ENCODE measurements at regions of chr22 and their contacts with region 1.

Region 1: DNA sequence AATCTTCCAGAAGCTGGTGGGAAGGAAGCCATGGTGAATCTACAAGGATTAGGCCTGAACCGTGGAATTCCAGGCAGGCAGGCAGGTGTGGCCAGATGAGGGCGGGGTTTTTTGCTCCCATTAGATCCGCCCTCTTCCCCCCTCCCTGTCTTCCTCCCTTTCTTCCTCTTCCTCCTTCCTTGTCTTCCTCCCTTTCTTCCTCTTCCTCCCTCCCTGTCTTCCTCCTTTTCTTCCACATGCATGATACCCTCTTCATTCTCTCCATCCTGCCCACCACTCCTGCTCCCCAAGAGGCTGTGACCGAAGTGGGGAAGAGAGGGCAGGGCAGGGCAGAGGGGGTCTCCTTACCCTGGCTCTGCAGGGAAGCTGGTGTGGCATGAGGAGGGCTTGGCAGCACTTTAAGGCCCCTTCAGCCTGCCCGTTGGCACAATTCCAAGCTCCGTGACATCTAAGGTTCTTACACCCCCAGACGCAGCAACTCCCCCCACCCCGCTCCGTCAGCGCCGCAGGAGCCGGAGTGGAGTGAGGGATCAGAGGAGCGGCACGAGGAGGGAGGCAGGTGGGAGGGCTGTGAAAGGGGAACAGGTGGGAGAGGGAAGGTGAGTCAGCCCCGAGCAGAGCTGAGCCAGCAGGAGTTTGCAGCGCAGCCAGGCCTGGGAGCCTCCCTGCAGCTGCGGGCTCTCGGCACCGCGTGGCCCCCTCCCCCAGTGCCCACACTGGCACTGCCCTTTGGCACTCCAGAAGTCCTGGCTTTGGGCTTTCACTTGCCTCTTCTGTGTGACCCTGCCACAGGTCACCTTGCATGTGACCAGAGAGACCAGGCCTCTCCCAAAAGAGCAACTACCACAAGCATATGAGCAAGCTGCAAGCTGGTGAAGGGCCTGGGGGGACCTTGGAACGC is 32.1 kb downstream of the KCNJ4 start:
- DNase-seq: no peak
- H3K4me3 ChIP-seq: no peak overlapping the region
- H3K27ac ChIP-seq: no peak overlapping the region
- H3K4me1 ChIP-seq: no peaks in the 10 kb centered on the region
- H3K27me3 ChIP-seq: no peaks in the 10 kb centered on the region
- CTCF ChIP-seq: no peak
- POLR2A ChIP-seq: no peak

Region 2: DNA sequence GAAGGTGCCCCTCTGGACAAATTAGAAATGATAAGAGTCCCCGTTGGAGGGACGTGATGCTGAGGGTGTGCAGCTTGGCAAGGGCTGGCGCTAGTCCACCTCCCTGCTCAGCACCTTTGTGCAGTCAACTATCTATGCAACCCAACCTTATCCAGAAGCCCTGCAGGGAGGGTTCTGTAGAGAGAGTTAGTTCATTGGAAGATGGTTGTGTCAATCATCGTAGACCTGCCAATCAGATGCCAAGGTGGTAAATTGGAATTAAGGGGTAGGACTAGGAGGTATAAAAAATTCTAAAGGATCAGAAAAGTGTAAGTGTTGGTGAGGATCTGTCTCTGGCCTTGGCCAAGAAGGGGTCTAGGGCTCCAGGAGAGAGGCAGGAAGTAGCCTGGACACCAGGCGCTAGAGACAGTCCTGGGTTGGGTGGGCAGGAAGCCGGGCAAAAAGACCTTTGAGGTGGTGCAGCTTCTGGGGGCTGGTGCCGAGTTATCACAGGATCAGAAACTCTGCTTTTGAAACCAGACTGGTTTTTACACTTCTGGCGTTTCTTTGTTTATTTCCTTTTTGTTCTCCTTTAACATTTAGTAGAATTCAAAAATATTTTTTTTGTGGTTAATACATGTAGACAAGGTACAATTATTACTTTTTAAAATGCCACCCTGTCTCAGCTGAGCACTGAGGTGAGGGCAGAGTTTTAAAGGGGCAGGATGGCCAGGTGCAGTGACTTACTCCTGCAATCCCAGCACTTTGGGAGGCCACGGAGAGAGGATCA is 1236.4 kb before region 1 on chr22:
- intact Hi-C with region 1: loop called (anchors 10 kb)
- DNase-seq: no peak
- H3K4me3 ChIP-seq: no peak overlapping the region
- H3K27ac ChIP-seq: peak overlapping the region; percentile 77 to 98
- H3K4me1 ChIP-seq: peaks cover 6 to 15% of the 10 kb centered on the region in 2 donors
- H3K27me3 ChIP-seq: no peaks in the 10 kb centered on the region
- CTCF ChIP-seq: no peak
- POLR2A ChIP-seq: no peak